IMR-90 (cell line): ENCODE measurements at regions of chr2 and their contacts with region 1.

Region 1: GRCh38 chr2:181660181-181660580 is 3.3 kb upstream of the CERKL start:
- DNase-seq: no peak
- ATAC-seq: no peak
- H3K4me3 ChIP-seq: no peak overlapping the region
- H3K27ac ChIP-seq: no peak overlapping the region
- H3K4me1 ChIP-seq: 0 out of 2 replicates have a peak, but pooled peaks cover 2% of the 10 kb centered on the region
- H3K27me3 ChIP-seq: peaks cover 31% of the 10 kb centered on the region
- CTCF ChIP-seq: no peak
- POLR2A ChIP-seq: no peak
- RAD21 ChIP-seq: no peak

Region 2: GRCh38 chr2:181592648-181593047 is 67.5 kb before region 1 on chr2:
- CTCF ChIA-PET with region 1: no interaction called
- POLR2A ChIA-PET with region 1: no interaction called
- dilution Hi-C with region 1: no loop called
- in situ Hi-C with region 1: no loop called
- intact Hi-C with region 1: loop called (anchors 1 kb)
- DNase-seq: no peak
- ATAC-seq: no peak
- H3K4me3 ChIP-seq: no peak overlapping the region
- H3K27ac ChIP-seq: no peak overlapping the region
- H3K4me1 ChIP-seq: no peaks in the 10 kb centered on the region
- H3K27me3 ChIP-seq: peaks cover 2% of the 10 kb centered on the region; the same call in 1 of the 2 replicates
- CTCF ChIP-seq: no peak
- POLR2A ChIP-seq: no peak
- RAD21 ChIP-seq: no peak